ENCODE measurements at regions of chr7 and their contacts with region 1.

Region 1: GRCh38 chr7:123865517-123866117 is 20.6 kb downstream of the HYAL4 start:
- DNase-seq: peak in 5 of 9 experiments; percentile 11 to 71 (median 37)
- ATAC-seq: peak; percentile 69
- H3K4me3 ChIP-seq: no peak overlapping the region
- H3K4me3 Mint-ChIP-seq: no peak overlapping the region
- H3K27ac ChIP-seq: no peak overlapping the region
- H3K27ac Mint-ChIP-seq: no peak overlapping the region
- H3K4me1 ChIP-seq: no peaks in the 10 kb centered on the region
- H3K4me1 Mint-ChIP-seq: no peaks in the 10 kb centered on the region
- H3K27me3 ChIP-seq: no peaks in the 10 kb centered on the region
- H3K27me3 Mint-ChIP-seq: peaks cover 8% of the 10 kb centered on the region
- CTCF ChIP-seq: peak; percentile 84

Region 2: GRCh38 chr7:123417580-123417979 is 448.0 kb before region 1 on chr7:
- CTCF ChIA-PET with region 1: no interaction called
- POLR2A ChIA-PET with region 1: no interaction called
- intact Hi-C with region 1: no loop called
- DNase-seq: no peak
- ATAC-seq: no peak
- H3K4me3 ChIP-seq: no peak overlapping the region
- H3K4me3 Mint-ChIP-seq: no peak overlapping the region
- H3K27ac ChIP-seq: no peak overlapping the region
- H3K27ac Mint-ChIP-seq: no peak overlapping the region
- H3K4me1 ChIP-seq: no peaks in the 10 kb centered on the region
- H3K4me1 Mint-ChIP-seq: no peaks in the 10 kb centered on the region
- H3K27me3 ChIP-seq: no peaks in the 10 kb centered on the region
- H3K27me3 Mint-ChIP-seq: no peaks in the 10 kb centered on the region
- CTCF ChIP-seq: no peak

Region 3: DNA sequence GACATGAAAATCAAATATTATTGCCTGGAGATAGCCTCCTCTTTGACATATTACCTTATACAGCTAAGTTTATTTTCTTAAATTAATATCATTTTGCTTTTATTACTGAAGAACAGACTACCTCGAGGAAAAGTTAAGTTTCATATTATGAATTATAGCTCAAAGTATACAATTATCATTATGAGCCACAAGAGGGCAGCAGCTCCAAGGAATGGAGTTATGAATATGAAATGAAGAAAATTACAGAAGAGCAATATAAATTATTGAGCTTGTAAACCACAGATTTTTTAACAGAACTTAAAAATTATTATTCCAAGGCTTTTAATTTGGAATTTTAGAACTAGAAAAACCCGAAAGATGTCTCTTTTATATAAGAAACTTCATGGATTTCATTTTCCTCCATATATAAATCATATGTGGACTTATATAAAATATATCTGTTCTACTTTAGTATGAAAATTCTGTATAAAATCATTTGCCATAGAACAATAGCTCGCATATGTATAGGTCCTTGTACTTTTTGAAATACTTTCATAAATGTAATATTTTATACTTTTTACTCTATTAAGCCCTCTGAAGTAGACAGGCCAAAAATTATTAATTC is 371.3 kb before region 1 on chr7:
- CTCF ChIA-PET with region 1: interaction called, 9 read pairs
- POLR2A ChIA-PET with region 1: no interaction called
- intact Hi-C with region 1: loop called (anchors 1 to 2 kb)
- DNase-seq: peak in 5 of 9 experiments; percentile 23 to 63 (median 35)
- ATAC-seq: no peak
- H3K4me3 ChIP-seq: no peak overlapping the region
- H3K4me3 Mint-ChIP-seq: no peak overlapping the region
- H3K27ac ChIP-seq: no peak overlapping the region
- H3K27ac Mint-ChIP-seq: no peak overlapping the region
- H3K4me1 ChIP-seq: no peaks in the 10 kb centered on the region
- H3K4me1 Mint-ChIP-seq: no peaks in the 10 kb centered on the region
- H3K27me3 ChIP-seq: peaks cover 0 to 2% of the 10 kb centered on the region in 2 experiments
- H3K27me3 Mint-ChIP-seq: peaks cover 11% of the 10 kb centered on the region
- CTCF ChIP-seq: peak; percentile 93

Region 4: DNA sequence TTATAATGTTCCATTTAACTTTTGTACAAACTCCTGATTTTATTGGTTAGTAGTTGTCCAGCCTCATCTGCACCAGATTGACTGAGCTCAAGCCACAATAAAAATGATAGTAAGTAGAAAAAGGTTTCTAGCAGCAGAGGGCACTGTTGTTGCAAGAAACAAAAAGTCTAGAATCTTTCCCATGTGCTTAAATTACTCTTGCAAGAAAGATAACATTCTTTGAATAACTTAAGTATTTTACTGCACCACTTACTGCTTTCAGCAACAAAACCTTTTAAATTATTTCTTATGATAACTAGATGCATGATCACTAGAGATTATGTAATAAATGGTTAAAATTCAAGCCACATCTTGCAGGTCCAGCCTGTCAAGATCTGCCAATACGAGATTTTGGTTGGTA is 182.9 kb before region 1 on chr7:
- CTCF ChIA-PET with region 1: interaction called, 16 read pairs
- POLR2A ChIA-PET with region 1: no interaction called
- intact Hi-C with region 1: loop called in 1 of 2 experiments (anchors 1 kb)
- DNase-seq: peak in 3 of 9 experiments; percentile 7 to 60 (median 53)
- ATAC-seq: no peak
- H3K4me3 ChIP-seq: no peak overlapping the region
- H3K4me3 Mint-ChIP-seq: no peak overlapping the region
- H3K27ac ChIP-seq: no peak overlapping the region
- H3K27ac Mint-ChIP-seq: no peak overlapping the region
- H3K4me1 ChIP-seq: no peaks in the 10 kb centered on the region
- H3K4me1 Mint-ChIP-seq: no peaks in the 10 kb centered on the region
- H3K27me3 ChIP-seq: no peaks in the 10 kb centered on the region
- H3K27me3 Mint-ChIP-seq: no peaks in the 10 kb centered on the region
- CTCF ChIP-seq: peak; percentile 69

Region 5: GRCh38 chr7:123797673-123798527 is 67.7 kb before region 1 on chr7:
- CTCF ChIA-PET with region 1: interaction called, 8 read pairs
- POLR2A ChIA-PET with region 1: no interaction called
- intact Hi-C with region 1: loop called (anchors 5 kb)
- DNase-seq: peak in 2 of 9 experiments; percentile 9 to 23
- ATAC-seq: no peak
- H3K4me3 ChIP-seq: no peak overlapping the region
- H3K4me3 Mint-ChIP-seq: no peak overlapping the region
- H3K27ac ChIP-seq: no peak overlapping the region
- H3K27ac Mint-ChIP-seq: no peak overlapping the region
- H3K4me1 ChIP-seq: no peaks in the 10 kb centered on the region
- H3K4me1 Mint-ChIP-seq: no peaks in the 10 kb centered on the region
- H3K27me3 ChIP-seq: no peaks in the 10 kb centered on the region
- H3K27me3 Mint-ChIP-seq: no peaks in the 10 kb centered on the region
- CTCF ChIP-seq: peak; percentile 19

Region 6: DNA sequence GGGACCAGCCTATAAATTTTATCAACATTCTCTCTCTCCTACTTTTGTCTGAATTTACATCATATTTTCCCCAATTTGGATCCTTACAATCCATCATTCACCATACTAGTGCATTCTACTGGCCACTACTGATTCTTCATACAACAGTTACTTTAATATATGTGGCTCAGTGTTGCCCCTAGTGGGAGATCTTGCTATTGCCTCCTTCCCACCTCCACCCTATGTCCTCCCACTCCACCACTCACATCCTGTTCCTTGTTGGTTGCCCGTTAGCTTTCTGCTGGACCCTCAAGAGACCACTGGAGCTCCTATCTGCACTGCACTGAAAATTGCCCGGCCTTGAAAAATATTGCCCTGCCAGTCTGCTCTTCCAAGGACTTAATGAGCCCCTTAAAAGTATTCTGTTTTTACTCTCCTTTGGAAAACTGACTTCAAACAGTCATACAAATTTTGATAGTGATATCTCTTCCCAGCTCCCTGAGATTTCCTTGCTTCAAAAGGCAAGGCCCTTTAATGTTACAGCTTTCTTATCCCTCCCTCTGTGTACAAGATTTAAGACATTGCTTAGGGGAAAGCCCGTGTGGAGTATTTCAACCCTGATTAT is 410.5 kb after region 1 on chr7:
- CTCF ChIA-PET with region 1: no interaction called
- POLR2A ChIA-PET with region 1: no interaction called
- intact Hi-C with region 1: no loop called
- DNase-seq: no peak
- ATAC-seq: no peak
- H3K4me3 ChIP-seq: no peak overlapping the region
- H3K4me3 Mint-ChIP-seq: no peak overlapping the region
- H3K27ac ChIP-seq: no peak overlapping the region
- H3K27ac Mint-ChIP-seq: no peak overlapping the region
- H3K4me1 ChIP-seq: no peaks in the 10 kb centered on the region
- H3K4me1 Mint-ChIP-seq: no peaks in the 10 kb centered on the region
- H3K27me3 ChIP-seq: no peaks in the 10 kb centered on the region
- H3K27me3 Mint-ChIP-seq: no peaks in the 10 kb centered on the region
- CTCF ChIP-seq: no peak

Region 7: DNA sequence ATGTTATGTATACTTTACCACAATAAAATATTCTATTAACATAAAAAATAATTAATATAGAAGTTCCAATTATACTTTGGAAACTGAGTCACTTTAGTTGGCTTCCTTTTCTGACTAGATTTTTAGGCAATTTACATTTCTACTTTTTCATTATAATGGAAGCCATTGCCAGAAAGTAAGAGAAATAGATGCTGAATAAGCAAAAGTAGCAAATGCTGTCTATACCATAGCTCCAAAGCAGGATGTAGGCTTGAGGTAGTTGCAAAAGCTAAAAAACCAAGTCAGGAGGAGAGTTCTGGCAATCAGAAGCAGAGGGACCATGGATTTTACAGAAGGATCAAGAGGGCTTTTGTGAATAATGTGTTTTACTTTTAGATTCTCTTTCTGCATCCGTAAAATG is 429.7 kb after region 1 on chr7:
- CTCF ChIA-PET with region 1: no interaction called
- POLR2A ChIA-PET with region 1: no interaction called
- intact Hi-C with region 1: no loop called
- DNase-seq: no peak
- ATAC-seq: no peak
- H3K4me3 ChIP-seq: no peak overlapping the region
- H3K4me3 Mint-ChIP-seq: no peak overlapping the region
- H3K27ac ChIP-seq: no peak overlapping the region
- H3K27ac Mint-ChIP-seq: no peak overlapping the region
- H3K4me1 ChIP-seq: no peaks in the 10 kb centered on the region
- H3K4me1 Mint-ChIP-seq: no peaks in the 10 kb centered on the region
- H3K27me3 ChIP-seq: no peaks in the 10 kb centered on the region
- H3K27me3 Mint-ChIP-seq: no peaks in the 10 kb centered on the region
- CTCF ChIP-seq: no peak

Region 8: GRCh38 chr7:124856299-124856888 is 990.8 kb after region 1 on chr7:
- CTCF ChIA-PET with region 1: no interaction called
- POLR2A ChIA-PET with region 1: no interaction called
- intact Hi-C with region 1: loop called in 1 of 2 experiments (anchors 10 kb)
- DNase-seq: peak in 2 of 9 experiments; percentile 15 to 30
- ATAC-seq: no peak
- H3K4me3 ChIP-seq: no peak overlapping the region
- H3K4me3 Mint-ChIP-seq: no peak overlapping the region
- H3K27ac ChIP-seq: no peak overlapping the region
- H3K27ac Mint-ChIP-seq: no peak overlapping the region
- H3K4me1 ChIP-seq: no peaks in the 10 kb centered on the region
- H3K4me1 Mint-ChIP-seq: no peaks in the 10 kb centered on the region
- H3K27me3 ChIP-seq: no peaks in the 10 kb centered on the region
- H3K27me3 Mint-ChIP-seq: no peaks in the 10 kb centered on the region
- CTCF ChIP-seq: peak; percentile 76